Activated CD8-positive, alpha-beta T cell treated with anti-CD3 and anti-CD28 coated beads, Interleukin-2, amount 10 ng/mL, durations not matched to agents 7 days and 5 days (primary cell): ENCODE measurements at regions of chr17 and their contacts with region 1.

Region 1: GRCh38 chr17:48259694-48260291 is 152.2 kb downstream of the SNX11 start:
- DNase-seq: no peak
- ATAC-seq: no peak
- H3K4me3 Mint-ChIP-seq: no peak overlapping the region
- H3K27ac Mint-ChIP-seq: no peak overlapping the region
- H3K4me1 Mint-ChIP-seq: peaks cover 9% of the 10 kb centered on the region
- H3K27me3 Mint-ChIP-seq: no peaks in the 10 kb centered on the region

Region 2: GRCh38 chr17:48244121-48244711 is 15.6 kb before region 1 on chr17:
- CTCF ChIA-PET with region 1: interaction called, 18 read pairs
- POLR2A ChIA-PET with region 1: no interaction called
- DNase-seq: no peak
- ATAC-seq: no peak
- H3K4me3 Mint-ChIP-seq: no peak overlapping the region
- H3K27ac Mint-ChIP-seq: peak overlapping the region; percentile 9
- H3K4me1 Mint-ChIP-seq: peaks cover 51% of the 10 kb centered on the region
- H3K27me3 Mint-ChIP-seq: no peaks in the 10 kb centered on the region

Region 3: DNA sequence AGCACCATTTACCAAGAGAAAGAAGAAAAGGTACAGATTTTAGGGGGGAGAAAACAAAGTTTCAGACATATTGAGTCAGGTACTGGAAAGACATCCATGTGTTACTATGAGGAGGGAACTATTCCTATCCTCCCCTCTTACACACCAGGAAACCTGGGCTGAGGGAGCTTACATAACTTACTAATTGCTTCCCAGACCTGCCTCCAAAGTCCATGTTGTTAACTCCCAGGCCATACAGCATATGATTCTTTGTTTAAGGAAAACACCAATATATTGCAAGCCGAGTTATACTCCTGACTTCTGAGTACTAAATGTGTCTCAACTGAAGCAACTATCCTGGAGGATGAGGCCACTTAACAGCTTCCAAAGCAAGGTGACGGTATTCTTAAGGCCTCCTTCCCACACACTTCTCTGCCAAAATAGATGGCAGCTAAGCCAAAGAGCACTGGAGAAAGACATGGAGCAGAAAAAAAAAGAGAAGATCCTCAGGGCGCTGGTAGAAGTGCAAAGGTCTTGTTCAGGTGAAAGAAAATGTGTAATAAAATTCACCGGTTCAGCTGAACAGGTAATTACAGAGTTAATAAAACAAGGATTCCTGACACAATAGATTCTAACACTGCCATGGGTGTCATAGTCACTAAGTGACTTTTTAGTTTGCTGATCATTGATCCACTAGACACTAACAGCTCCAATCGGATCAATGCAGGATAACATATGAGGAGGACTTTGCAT is 19.1 kb after region 1 on chr17:
- CTCF ChIA-PET with region 1: interaction called, 20 read pairs
- POLR2A ChIA-PET with region 1: interaction called, 3 read pairs
- DNase-seq: no peak
- ATAC-seq: no peak
- H3K4me3 Mint-ChIP-seq: no peak overlapping the region
- H3K27ac Mint-ChIP-seq: no peak overlapping the region
- H3K4me1 Mint-ChIP-seq: no peaks in the 10 kb centered on the region
- H3K27me3 Mint-ChIP-seq: no peaks in the 10 kb centered on the region

Region 4: DNA sequence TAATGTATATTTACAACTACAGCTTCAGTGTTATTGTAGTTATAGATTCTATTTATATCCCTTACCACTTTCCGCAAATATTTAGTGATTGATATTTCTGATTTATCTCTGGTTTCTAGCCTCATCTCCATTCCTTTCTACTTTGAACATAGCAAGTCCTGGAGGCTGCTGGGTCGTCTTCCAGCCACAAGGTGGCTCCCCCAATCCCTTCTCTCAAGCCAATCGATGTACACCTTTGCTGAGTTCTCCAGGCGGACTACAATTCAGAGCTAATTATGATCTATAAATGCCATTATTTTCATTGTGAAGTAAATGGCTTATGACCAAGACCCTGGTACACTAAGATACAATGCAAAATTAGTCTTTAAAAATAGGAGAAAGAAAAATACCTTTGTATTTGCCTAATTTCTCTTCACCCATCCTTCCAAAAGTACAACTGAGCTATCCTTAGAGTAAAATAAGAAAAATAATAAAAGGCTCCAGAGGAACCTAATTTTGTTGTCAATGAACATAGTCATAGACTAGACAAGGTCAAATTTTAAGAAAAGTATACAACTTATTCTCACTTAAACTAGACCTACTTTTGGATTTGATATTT is 48.1 kb after region 1 on chr17:
- CTCF ChIA-PET with region 1: interaction called, 18 read pairs
- POLR2A ChIA-PET with region 1: no interaction called
- DNase-seq: peak; percentile 63
- ATAC-seq: peak; percentile 74
- H3K4me3 Mint-ChIP-seq: no peak overlapping the region
- H3K27ac Mint-ChIP-seq: no peak overlapping the region
- H3K4me1 Mint-ChIP-seq: peaks cover 2% of the 10 kb centered on the region
- H3K27me3 Mint-ChIP-seq: no peaks in the 10 kb centered on the region

Region 5: DNA sequence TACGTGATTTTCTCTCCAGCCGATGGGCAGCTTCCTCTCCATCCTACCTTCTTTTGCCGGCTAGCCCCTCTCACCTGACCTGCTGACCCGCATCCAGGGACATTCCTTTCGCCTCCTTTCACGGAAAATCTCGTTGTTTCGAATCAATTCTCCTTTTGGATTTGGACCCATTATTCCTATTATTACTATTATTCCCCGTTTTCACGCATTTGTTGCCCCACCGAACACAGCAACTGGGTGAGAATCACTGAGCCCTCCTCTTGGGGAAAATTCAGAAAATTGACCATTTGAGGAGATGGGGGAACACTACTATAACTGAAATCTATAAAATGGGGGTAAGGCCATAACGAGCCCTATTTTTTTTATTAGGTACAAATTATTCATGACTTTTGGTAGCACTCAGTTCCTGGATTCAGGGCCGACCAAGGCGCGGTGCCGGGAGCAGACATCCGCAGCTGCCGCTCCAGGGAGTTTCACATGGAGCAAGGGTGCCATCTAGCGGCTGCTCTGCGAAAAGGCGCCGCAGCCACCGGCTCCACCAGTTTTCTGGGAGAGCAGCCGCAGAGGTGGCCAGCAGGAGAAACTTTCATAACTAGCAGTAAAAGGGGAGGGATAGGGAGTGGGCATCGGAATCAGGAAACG is 358.6 kb after region 1 on chr17:
- CTCF ChIA-PET with region 1: interaction called, 15 read pairs
- POLR2A ChIA-PET with region 1: no interaction called
- DNase-seq: peak; percentile 86
- ATAC-seq: peak; percentile 69
- H3K4me3 Mint-ChIP-seq: peak overlapping the region; percentile 27
- H3K27ac Mint-ChIP-seq: no peak overlapping the region
- H3K4me1 Mint-ChIP-seq: peaks cover 39% of the 10 kb centered on the region
- H3K27me3 Mint-ChIP-seq: peaks cover 87% of the 10 kb centered on the region